ENCODE measurements at regions of chr20 and their contacts with region 1.

Region 1: DNA sequence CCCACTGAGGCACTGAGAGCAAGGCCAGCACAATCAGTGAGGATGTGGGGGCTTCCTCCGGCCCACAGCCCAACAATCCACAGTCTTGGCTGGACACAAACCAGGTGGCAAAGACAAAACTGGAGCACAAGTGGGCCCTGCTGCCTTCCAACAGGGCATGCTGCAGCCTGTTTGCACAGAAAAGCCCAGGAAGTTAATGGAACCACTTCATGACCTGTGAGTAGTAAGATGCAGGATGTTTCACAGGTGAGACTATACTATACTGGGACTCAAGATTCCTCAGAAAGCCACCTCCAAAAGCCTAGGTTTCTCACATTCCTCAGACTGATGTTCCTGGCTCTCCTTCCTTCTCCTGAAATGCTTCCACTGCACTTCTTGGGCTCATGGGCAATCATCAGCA is 235.5 kb downstream of the KIF16B start:
- DNase-seq: no peak
- H3K4me3 Mint-ChIP-seq: no peak overlapping the region
- H3K27ac Mint-ChIP-seq: no peak overlapping the region
- H3K4me1 Mint-ChIP-seq: no peaks in the 10 kb centered on the region
- H3K27me3 Mint-ChIP-seq: no peaks in the 10 kb centered on the region

Region 2: DNA sequence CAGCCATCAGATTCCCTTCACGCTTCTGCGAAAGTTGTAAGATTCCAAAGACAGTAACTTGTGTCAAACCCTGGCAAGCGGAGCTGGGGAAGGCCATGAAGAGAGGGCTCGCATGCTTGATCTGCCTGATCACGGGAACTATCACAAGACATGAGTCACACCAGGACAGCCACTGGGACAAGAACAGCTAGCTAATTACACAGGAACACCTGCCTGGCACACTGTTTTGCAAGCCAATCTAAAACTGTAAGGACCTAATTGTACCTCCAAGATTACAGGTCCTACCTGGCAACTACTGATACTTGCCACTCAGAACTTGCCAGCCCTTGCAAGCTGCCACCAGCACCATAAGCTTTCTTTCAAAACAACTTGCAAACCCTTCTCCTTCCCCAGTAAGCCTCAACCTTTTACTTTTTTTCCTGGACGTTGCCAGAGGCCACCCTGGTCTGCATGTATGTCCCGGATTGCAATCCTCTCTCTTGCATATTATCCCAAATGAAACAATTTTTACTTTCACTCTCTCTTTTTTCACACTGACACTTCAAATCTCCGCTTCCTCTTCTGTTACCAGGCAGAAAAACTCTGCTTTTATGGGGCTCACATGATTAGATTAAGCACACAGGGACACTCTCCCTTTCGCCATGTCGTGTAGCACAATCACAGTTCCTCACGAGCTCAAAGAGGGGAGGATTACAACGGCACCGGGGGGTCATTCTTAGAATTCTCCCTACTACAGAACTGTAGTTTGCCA is 53.5 kb before region 1 on chr20:
- intact Hi-C with region 1: loop called (anchors 10 kb)
- DNase-seq: no peak
- H3K4me3 Mint-ChIP-seq: no peak overlapping the region
- H3K27ac Mint-ChIP-seq: no peak overlapping the region
- H3K4me1 Mint-ChIP-seq: no peaks in the 10 kb centered on the region
- H3K27me3 Mint-ChIP-seq: no peaks in the 10 kb centered on the region

Region 3: DNA sequence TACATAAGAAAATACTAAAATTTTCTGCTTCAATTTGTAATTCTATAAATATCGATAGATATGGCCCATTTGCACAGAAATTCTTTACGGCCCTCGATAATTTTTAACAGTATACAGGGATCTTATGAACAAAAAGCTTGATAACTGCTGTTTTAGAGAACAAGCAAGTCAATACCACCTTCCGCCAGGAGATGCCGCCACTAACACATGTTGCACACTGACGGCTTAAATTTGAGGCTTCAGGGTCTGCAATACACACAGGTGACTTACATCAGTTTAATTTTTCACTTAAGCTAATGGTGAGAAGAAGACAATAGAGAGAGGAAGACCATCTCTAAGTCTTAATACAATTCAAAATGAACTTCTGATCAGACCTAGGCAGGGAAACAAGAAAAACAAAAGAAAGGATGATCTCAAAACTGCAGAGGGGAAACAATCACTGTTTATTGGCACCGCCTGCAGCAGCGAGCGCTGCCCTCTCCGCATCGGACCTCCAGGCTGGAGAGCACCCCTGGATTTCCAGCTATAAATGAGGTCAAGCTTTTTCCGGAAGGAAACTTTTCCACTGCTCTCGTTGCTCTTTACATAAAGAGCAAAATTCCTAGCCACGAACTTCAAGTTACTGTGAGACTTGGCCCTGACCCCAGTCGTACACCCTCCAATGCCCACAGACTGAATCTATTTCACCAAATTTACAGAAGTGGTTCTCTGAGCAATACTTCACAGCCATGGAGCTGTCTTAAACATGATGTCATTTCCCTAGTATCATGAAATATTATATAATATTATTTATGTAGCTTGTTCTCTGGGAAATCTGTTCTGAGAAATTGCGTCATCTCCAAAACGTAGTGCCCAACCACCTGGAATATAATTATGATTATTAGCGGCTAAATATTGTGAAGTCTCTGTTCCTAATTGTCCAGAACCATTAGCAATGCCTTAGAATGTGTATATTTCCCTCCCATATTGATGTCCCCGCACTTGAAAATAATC is 464.5 kb after region 1 on chr20:
- intact Hi-C with region 1: no loop called
- DNase-seq: peak; percentile 15
- H3K4me3 Mint-ChIP-seq: no peak overlapping the region
- H3K27ac Mint-ChIP-seq: no peak overlapping the region
- H3K4me1 Mint-ChIP-seq: no peaks in the 10 kb centered on the region
- H3K27me3 Mint-ChIP-seq: peaks cover 6% of the 10 kb centered on the region

Measured in activated T-helper 1 cell treated with anti-CD3 and anti-CD28 coated beads, Interleukin-12 subunit alpha, Interleukin-12 subunit beta, Interleukin-2, Interleukin-4 antibody, amounts not matched to agents 30 ng/mL and 10 ng/mL and 1 ng/mL, durations not matched to agents 14 hours and 24 hours and 36 hours (primary cell).